ENCODE measurements at regions of chr14 and their contacts with region 1.

Region 1: DNA sequence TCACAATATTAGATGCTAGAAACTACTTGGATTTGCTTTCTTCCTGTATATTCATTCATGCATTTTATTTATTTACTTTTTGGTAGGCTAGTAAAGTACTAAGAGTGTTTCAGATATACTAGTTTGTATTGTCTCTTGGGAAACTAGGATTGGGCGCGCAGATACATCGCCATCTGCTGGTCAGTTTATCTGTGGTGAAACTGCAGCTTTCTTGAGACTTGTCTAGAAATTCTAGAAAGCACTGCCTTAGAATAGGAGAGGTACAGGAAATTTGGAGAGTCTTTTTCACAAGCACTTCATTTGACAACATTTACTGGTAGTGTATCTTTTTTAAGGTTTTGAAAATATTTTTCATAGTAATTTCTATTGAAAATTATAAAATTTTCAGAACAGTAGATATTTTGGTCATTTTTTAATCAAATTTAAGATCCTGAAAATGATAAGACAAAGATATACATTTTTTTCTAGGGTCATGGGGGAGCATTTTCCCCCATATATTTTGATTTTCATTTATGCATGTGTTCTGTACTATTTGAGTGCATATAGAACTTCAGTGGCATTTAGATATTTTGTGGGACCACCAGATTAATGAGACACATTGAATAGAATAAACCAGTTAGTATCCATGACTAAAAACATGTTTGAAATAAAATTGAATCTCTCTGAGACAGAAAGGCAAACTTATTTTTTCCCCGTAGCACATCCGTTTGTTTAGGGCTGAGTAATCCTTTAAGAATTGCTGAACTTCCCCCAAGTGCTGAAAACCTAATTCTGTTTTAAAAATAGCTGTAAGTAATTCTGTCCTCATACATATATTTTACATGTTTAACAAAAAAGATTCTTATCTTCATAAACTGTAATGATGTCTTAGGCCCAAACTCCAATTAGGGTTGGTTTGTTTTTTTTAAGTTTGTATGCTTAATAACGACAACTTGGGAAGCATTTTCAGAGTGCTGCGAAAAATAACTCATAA is 44.5 kb downstream of the SLC38A6 start:
- DNase-seq: peak; percentile 19 to 77
- ATAC-seq: peak; percentile 46 to 59 (median 53)
- H3K4me3 ChIP-seq: no peak overlapping the region
- H3K4me3 Mint-ChIP-seq: no peak overlapping the region
- H3K27ac ChIP-seq: no peak overlapping the region
- H3K27ac Mint-ChIP-seq: no peak overlapping the region
- H3K4me1 ChIP-seq: no peaks in the 10 kb centered on the region
- H3K4me1 Mint-ChIP-seq: no peaks in the 10 kb centered on the region
- H3K27me3 ChIP-seq: no peaks in the 10 kb centered on the region
- H3K27me3 Mint-ChIP-seq: no peaks in the 10 kb centered on the region
- CTCF ChIP-seq: peak; percentile 97

Region 2: GRCh38 chr14:60349663-60350365 is 675.7 kb before region 1 on chr14:
- intact Hi-C with region 1: loop called (anchors 1 kb)
- DNase-seq: peak in 1 of 2 donors; percentile 63
- ATAC-seq: peak in 1 of 3 donors; percentile 55
- H3K4me3 ChIP-seq: no peak overlapping the region
- H3K4me3 Mint-ChIP-seq: no peak overlapping the region
- H3K27ac ChIP-seq: no peak overlapping the region
- H3K27ac Mint-ChIP-seq: no peak overlapping the region
- H3K4me1 ChIP-seq: no peaks in the 10 kb centered on the region
- H3K4me1 Mint-ChIP-seq: peaks cover 0 to 5% of the 10 kb centered on the region in 2 donors
- H3K27me3 ChIP-seq: no peaks in the 10 kb centered on the region
- H3K27me3 Mint-ChIP-seq: peaks cover 20 to 32% of the 10 kb centered on the region in 2 donors
- CTCF ChIP-seq: peak; percentile 69

Region 3: DNA sequence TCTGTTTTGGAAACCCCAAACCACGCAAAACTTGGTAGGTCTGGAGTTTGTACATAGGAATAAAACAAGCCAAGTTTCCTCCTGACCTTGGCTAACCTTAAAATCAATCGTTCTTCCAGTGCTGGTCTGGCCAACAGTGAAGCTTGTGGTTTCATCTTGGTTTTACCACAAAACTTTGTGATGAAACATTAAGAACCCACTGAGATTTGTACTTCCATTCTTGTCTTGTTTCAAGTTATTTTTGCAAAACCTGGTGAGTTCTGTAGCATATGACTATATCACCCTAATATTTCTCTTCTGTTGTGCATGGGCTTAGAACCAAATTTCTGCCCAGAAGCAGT is 402.6 kb before region 1 on chr14:
- intact Hi-C with region 1: loop called (anchors 1 kb)
- DNase-seq: no peak
- ATAC-seq: no peak
- H3K4me3 ChIP-seq: no peak overlapping the region
- H3K4me3 Mint-ChIP-seq: no peak overlapping the region
- H3K27ac ChIP-seq: no peak overlapping the region
- H3K27ac Mint-ChIP-seq: no peak overlapping the region
- H3K4me1 ChIP-seq: no peaks in the 10 kb centered on the region
- H3K4me1 Mint-ChIP-seq: no peaks in the 10 kb centered on the region
- H3K27me3 ChIP-seq: peaks cover 7% of the 10 kb centered on the region
- H3K27me3 Mint-ChIP-seq: peaks cover 10 to 16% of the 10 kb centered on the region in 2 donors
- CTCF ChIP-seq: no peak

Region 4: GRCh38 chr14:60980811-60981632 is 44.5 kb before region 1 on chr14 and contains the starts of genes SLC38A6 and TRMT5:
- intact Hi-C with region 1: loop called (anchors 1 kb)
- DNase-seq: peak; percentile 90 to 94
- ATAC-seq: peak; percentile 82 to 90 (median 89)
- H3K4me3 ChIP-seq: peak within 1 kb of the TSS; percentile 67
- H3K4me3 Mint-ChIP-seq: no peak within 1 kb of the TSS
- H3K27ac ChIP-seq: peak within 1 kb of the TSS; percentile 75
- H3K27ac Mint-ChIP-seq: no peak within 1 kb of the TSS
- H3K4me1 ChIP-seq: peaks cover 12% of the 10 kb centered on the region
- H3K4me1 Mint-ChIP-seq: peaks cover 0 to 5% of the 10 kb centered on the region in 2 donors
- H3K27me3 ChIP-seq: no peaks in the 10 kb centered on the region
- H3K27me3 Mint-ChIP-seq: no peaks in the 10 kb centered on the region
- CTCF ChIP-seq: no peak
- total RNA-seq, gene SLC38A6: 7.1 to 11.0 (median 8.8) TPM
- total RNA-seq, gene TRMT5: 1.7 to 2.6 (median 1.9) TPM

Region 5: GRCh38 chr14:61042220-61042619 is 16.7 kb after region 1 on chr14:
- intact Hi-C with region 1: no loop called
- DNase-seq: no peak
- ATAC-seq: no peak
- H3K4me3 ChIP-seq: no peak overlapping the region
- H3K4me3 Mint-ChIP-seq: no peak overlapping the region
- H3K27ac ChIP-seq: no peak overlapping the region
- H3K27ac Mint-ChIP-seq: no peak overlapping the region
- H3K4me1 ChIP-seq: no peaks in the 10 kb centered on the region
- H3K4me1 Mint-ChIP-seq: no peaks in the 10 kb centered on the region
- H3K27me3 ChIP-seq: no peaks in the 10 kb centered on the region
- H3K27me3 Mint-ChIP-seq: no peaks in the 10 kb centered on the region
- CTCF ChIP-seq: no peak

Region 6: GRCh38 chr14:61218767-61219166 is 193.2 kb after region 1 on chr14:
- intact Hi-C with region 1: no loop called
- DNase-seq: no peak
- ATAC-seq: no peak
- H3K4me3 ChIP-seq: no peak overlapping the region
- H3K4me3 Mint-ChIP-seq: no peak overlapping the region
- H3K27ac ChIP-seq: no peak overlapping the region
- H3K27ac Mint-ChIP-seq: no peak overlapping the region
- H3K4me1 ChIP-seq: no peaks in the 10 kb centered on the region
- H3K4me1 Mint-ChIP-seq: no peaks in the 10 kb centered on the region
- H3K27me3 ChIP-seq: peaks cover 7% of the 10 kb centered on the region
- H3K27me3 Mint-ChIP-seq: peaks cover 39 to 70% of the 10 kb centered on the region in 2 donors
- CTCF ChIP-seq: no peak

Region 7: DNA sequence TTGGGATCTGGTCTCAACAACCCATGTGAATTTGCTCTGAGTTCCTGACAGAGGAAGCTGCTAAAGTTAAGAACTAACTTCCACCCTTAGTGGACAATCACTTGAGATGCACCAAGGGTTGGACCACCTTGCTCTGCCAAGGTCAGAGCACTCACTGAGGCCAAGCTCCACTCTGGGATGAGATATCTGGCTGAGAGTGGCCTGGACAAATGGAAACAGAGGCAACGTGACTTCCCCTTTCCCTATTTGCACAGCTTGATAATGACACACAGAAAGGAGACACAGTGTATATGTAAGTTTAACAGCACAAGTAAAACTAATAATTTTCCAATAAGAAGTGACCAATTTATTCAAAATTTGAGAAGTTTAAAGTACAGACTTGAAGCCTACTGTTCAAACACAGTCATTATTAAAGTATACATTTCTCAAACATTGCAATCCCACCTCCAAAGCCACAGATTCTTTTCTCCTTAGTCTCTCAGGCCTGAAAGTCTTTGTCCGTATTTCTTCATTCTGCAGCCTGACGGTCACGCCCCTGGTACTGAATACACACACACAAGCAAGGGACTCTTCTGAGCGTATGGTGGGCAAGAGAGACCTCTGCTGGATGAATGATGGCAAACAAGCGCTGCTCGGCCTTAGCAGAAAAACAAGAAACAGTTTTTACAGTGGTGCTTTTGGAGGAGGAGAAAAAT is 227.0 kb after region 1 on chr14:
- intact Hi-C with region 1: loop called (anchors 1 kb)
- DNase-seq: peak; percentile 31 to 80
- ATAC-seq: peak; percentile 80 to 100 (median 95)
- H3K4me3 ChIP-seq: no peak overlapping the region
- H3K4me3 Mint-ChIP-seq: no peak overlapping the region
- H3K27ac ChIP-seq: no peak overlapping the region
- H3K27ac Mint-ChIP-seq: no peak overlapping the region
- H3K4me1 ChIP-seq: no peaks in the 10 kb centered on the region
- H3K4me1 Mint-ChIP-seq: peaks cover 0 to 5% of the 10 kb centered on the region in 2 donors
- H3K27me3 ChIP-seq: no peaks in the 10 kb centered on the region
- H3K27me3 Mint-ChIP-seq: peaks cover 19 to 37% of the 10 kb centered on the region in 2 donors
- CTCF ChIP-seq: peak; percentile 66

Measured in natural killer cell (primary cell).